ENCODE measurements at regions of chr1 and their contacts with region 1.

Region 1: GRCh38 chr1:9910425-9911178 is 533 bp upstream of the CTNNBIP1 start:
- DNase-seq: peak; percentile 96
- ATAC-seq: peak; percentile 93
- H3K4me3 ChIP-seq: peak overlapping the region; percentile 73 to 82 (median 74)
- H3K27ac ChIP-seq: peak overlapping the region; percentile 87
- H3K4me1 ChIP-seq: peaks cover 80% of the 10 kb centered on the region
- H3K27me3 ChIP-seq: no peaks in the 10 kb centered on the region; a peak in 1 of 5 replicates
- CTCF ChIP-seq: 0 out of 2 replicates have a peak, but pooled peaks have one; percentile 13
- EP300 ChIP-seq: no peak
- POLR2A ChIP-seq: peak; percentile 85 to 86
- RAD21 ChIP-seq: 0 out of 2 replicates have a peak, but pooled peaks have one; percentile 43

Region 2: DNA sequence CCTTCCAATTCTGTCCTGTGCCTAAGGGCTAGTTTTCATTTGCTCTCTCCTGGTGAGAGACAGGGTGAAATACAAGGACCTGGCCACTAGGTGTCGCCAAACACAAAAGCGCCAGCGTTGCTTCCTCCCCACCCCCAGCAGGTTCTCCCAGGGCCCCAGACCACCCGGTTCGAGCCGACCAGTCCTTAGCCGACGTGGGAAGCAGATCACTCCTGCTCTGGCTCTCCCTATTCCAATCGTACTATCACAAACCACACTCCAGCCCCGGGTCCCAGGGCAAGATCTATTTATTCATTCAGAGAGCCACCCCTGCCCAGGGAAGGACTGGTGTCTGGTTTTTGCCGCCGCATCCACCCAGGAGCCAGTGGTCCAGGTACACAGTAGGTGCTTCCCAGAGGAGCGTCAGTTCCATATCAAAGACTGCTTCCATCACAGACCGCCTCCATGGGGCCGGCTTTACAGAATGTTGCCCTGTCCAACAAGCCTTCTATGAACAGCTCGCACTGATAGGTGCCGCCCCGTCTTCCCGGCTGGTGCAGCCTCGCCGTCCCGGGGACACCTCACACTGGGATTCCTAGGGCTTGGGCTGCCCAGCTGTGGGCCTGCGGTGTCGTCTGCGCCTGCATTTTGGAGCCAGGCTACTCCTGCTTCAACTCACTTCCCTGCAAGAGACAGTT is 35.5 kb before region 1 on chr1:
- CTCF ChIA-PET with region 1: interaction called, 10 read pairs
- POLR2A ChIA-PET with region 1: interaction called, 3 read pairs
- in situ Hi-C with region 1: no loop called
- intact Hi-C with region 1: loop called (anchors 1 kb)
- DNase-seq: peak; percentile 68
- ATAC-seq: peak; percentile 84
- H3K4me3 ChIP-seq: peak overlapping the region in 1 of 3 experiments; percentile 23; a peak in 1 of 6 replicates
- H3K27ac ChIP-seq: peak overlapping the region; percentile 41
- H3K4me1 ChIP-seq: peaks cover 45% of the 10 kb centered on the region
- H3K27me3 ChIP-seq: no peaks in the 10 kb centered on the region
- CTCF ChIP-seq: peak; percentile 94
- EP300 ChIP-seq: no peak
- POLR2A ChIP-seq: no peak
- RAD21 ChIP-seq: peak; percentile 94

Region 3: DNA sequence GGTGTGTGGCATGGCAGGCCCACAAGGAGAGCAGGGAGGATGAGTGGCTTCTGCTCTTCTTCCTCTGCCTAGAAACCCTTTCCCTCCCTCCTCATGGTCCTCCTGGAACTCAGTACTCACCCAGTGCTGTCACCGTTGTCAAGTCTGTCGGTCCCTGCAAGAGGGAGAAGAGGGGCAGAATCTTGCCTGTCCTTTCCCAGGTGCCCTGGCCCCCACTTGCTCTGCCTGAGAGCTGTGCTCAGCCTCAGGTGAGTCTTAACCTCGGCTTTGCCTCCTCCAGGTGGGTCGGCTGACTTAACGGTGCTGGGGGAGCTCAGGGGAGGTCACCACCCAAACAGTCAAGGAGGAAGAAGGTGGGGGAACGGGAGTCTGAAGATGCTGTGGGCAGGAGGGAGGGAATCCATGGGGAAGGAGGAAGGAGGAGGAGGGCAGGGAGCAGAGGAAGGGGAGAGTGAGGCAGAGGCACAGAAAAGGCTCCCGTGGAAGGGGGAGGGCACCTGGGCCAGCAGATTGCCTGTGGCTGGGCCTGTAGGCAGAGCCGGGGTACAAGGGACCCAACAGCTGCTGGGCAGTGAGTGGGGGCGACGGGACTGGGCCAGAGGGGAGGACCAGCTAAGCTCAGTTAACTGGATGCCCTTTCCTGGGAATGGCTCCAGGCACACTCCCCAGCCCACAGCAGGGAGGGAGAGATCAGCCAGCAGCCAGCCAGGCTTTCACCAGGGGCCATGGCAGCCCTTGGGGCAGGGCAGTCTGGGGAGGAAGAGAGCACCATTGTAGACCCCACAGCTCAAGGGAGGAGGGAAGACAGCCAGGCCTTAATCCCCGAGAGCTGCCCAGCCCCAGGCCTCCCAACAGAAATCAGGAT is 26.8 kb before region 1 on chr1:
- CTCF ChIA-PET with region 1: no interaction called
- POLR2A ChIA-PET with region 1: interaction called, 3 read pairs
- in situ Hi-C with region 1: no loop called
- intact Hi-C with region 1: loop called (anchors 2 kb)
- DNase-seq: no peak
- ATAC-seq: no peak; the same call in 2 of the 3 replicates
- H3K4me3 ChIP-seq: no peak overlapping the region
- H3K27ac ChIP-seq: no peak overlapping the region
- H3K4me1 ChIP-seq: peaks cover 12% of the 10 kb centered on the region
- H3K27me3 ChIP-seq: no peaks in the 10 kb centered on the region
- CTCF ChIP-seq: no peak
- EP300 ChIP-seq: no peak
- POLR2A ChIP-seq: no peak
- RAD21 ChIP-seq: no peak

Region 4: GRCh38 chr1:9900142-9901043 is 10.2 kb before region 1 on chr1:
- CTCF ChIA-PET with region 1: no interaction called
- POLR2A ChIA-PET with region 1: interaction called, 12 read pairs
- in situ Hi-C with region 1: no loop called
- intact Hi-C with region 1: no loop called
- DNase-seq: peak; percentile 88
- ATAC-seq: peak; percentile 92
- H3K4me3 ChIP-seq: peak overlapping the region in 1 of 3 experiments; percentile 56; a peak in 3 of 6 replicates
- H3K27ac ChIP-seq: peak overlapping the region; percentile 56
- H3K4me1 ChIP-seq: peaks cover 58% of the 10 kb centered on the region
- H3K27me3 ChIP-seq: no peaks in the 10 kb centered on the region; a peak in 1 of 5 replicates
- CTCF ChIP-seq: no peak
- EP300 ChIP-seq: no peak
- POLR2A ChIP-seq: 0 out of 4 replicates have a peak, but pooled peaks of 1 of the 2 experiments have one; percentile 22
- RAD21 ChIP-seq: no peak; the same call in 1 of the 2 replicates

Region 5: DNA sequence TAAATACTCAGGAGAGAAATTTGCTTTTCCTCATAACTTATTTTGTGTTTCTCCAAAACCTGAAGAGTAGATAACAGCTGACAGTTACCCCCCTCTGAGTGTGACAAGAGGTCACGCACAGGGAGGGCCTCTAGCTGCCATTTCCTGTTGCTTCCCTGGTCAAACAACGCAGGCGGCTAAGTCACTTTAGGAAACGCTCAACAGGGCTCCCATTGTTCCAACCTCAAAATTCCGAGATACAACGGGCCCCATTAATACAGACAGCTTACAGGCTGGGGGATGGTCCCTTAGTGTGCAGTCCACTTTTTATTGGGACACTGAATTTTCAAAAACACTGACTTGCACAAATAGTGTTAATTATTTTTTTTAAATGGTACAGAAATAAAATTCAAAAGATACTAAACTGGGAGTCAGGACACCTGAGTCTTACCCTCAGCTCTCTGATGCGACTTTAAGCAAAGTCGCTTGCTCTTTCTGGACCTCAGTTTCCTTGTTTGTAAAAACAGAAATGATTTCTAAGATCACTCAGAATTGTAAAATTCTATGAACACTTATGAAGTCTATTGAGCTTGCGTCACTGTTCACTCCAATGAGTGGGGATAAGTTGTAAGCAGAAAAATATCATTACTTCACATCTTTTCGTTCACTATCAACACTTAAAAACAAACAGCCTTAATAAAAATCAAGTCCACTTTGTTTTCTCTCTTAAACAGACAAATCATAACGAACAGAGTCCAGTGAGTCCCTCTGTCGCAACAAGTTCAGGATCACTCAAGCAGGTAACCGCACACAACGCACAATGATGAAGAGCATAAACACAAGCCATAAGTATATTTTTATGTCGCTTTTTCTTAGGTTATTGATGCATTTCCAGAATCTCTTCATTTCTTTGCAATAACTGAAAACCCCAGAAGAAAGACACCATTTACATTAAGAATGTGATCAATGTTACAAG is 19.1 kb after region 1 on chr1:
- CTCF ChIA-PET with region 1: no interaction called
- POLR2A ChIA-PET with region 1: interaction called, 130 read pairs
- in situ Hi-C with region 1: no loop called
- intact Hi-C with region 1: loop called (anchors 2 kb)
- DNase-seq: peak; percentile 97
- ATAC-seq: peak; percentile 97
- H3K4me3 ChIP-seq: peak overlapping the region; percentile 7 to 38 (median 36); a peak in 2 of 6 replicates
- H3K27ac ChIP-seq: peak overlapping the region; percentile 99
- H3K4me1 ChIP-seq: peaks cover 91% of the 10 kb centered on the region
- H3K27me3 ChIP-seq: no peaks in the 10 kb centered on the region
- CTCF ChIP-seq: peak; percentile 26; the same call in 1 of the 2 replicates
- EP300 ChIP-seq: peak in 1 of 2 experiments; percentile 98; a peak in 3 of 4 replicates
- POLR2A ChIP-seq: no peak
- RAD21 ChIP-seq: peak; percentile 23; the same call in 1 of the 2 replicates

Region 6: GRCh38 chr1:10014016-10014415 is 103.4 kb after region 1 on chr1:
- CTCF ChIA-PET with region 1: no interaction called
- POLR2A ChIA-PET with region 1: no interaction called
- in situ Hi-C with region 1: no loop called
- intact Hi-C with region 1: no loop called
- DNase-seq: no peak
- ATAC-seq: no peak
- H3K4me3 ChIP-seq: no peak overlapping the region
- H3K27ac ChIP-seq: no peak overlapping the region
- H3K4me1 ChIP-seq: no peaks in the 10 kb centered on the region
- H3K27me3 ChIP-seq: no peaks in the 10 kb centered on the region; a peak in 1 of 5 replicates
- CTCF ChIP-seq: no peak
- EP300 ChIP-seq: no peak
- POLR2A ChIP-seq: no peak
- RAD21 ChIP-seq: no peak